ENCODE measurements at regions of chr13 and their contacts with region 1.

Region 1: DNA sequence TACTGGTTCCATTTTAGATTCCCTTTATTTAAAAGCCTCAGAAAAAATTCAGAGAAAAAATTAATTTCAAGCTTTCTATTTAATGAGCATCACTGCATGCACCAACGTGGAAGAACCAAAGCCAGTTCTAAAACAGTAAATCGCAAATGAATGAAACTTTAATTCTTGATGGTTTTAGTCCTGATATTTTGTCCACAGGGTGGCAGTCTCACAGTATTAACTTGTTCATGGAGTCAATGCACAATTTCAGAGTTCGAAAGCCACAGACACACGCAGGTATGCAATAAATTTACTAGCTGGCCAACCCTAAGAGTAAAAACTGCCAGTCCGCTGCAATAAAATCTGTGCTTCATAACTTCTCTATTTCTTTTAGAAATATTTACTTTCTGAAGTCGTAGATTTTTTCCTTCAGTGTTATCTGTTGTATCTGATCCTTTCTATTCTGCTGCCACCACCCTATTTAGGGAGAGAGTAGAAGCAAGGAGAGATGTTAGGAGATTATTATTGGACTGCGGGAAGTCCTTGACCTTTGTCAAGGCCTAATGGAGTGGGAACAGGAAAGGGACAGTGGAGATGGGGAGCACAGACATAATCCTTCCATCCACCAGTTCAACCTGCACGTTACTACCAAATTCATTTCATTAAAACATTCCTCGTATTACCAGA is 7.0 kb upstream of the WBP4 start:
- DNase-seq: no peak
- ATAC-seq: peak; percentile 18 to 34
- H3K4me3 ChIP-seq: no peak overlapping the region
- H3K27ac ChIP-seq: peak overlapping the region; percentile 77 to 100 (median 95)
- H3K4me1 ChIP-seq: peaks cover 96 to 98% of the 10 kb centered on the region in 2 donors
- H3K27me3 ChIP-seq: no peaks in the 10 kb centered on the region
- CTCF ChIP-seq: peak in 4 of 5 experiments; percentile 36 to 65 (median 58)
- POLR2A ChIP-seq: no peak

Region 2: DNA sequence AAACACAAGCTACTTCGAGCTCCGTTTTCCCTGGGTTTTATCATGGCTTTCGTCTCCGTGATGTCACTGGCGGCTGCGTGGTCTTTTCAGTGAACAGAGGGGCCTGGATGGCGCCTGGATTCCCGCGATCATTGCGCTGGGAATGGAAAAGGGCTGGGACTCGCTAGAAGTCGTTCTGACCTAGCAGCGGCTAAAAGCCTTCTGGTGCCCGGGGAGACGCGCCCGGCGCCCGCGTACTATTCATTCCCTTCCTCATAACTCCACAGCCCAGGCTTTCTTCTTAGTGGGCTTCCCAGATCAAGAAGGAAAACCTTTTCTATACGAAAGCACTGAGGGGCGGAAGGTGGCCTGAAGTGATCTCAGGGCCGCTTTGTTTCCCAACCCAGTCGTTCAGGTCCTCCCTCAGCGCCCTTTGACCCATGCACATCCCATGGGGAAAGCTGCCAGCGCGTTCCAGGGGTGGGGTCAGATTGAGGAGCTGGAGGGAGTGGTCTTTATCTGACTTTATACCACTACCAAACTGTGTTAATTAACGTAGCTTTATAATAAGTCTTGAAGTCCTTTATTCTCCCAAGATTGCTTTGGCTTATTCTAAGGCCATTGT is 131.8 kb before region 1 on chr13:
- in situ Hi-C with region 1: loop called in 1 of 4 experiments (anchors 10 kb)
- intact Hi-C with region 1: no loop called
- DNase-seq: no peak
- ATAC-seq: no peak
- H3K4me3 ChIP-seq: no peak overlapping the region
- H3K27ac ChIP-seq: no peak overlapping the region
- H3K4me1 ChIP-seq: peaks cover 9 to 13% of the 10 kb centered on the region in 2 donors
- H3K27me3 ChIP-seq: no peaks in the 10 kb centered on the region
- CTCF ChIP-seq: no peak
- POLR2A ChIP-seq: no peak

Region 3: GRCh38 chr13:40974460-40975407 is 79.6 kb before region 1 on chr13:
- in situ Hi-C with region 1: loop called in 1 of 4 experiments (anchors 10 kb)
- intact Hi-C with region 1: no loop called
- DNase-seq: peak in 1 of 2 donors; percentile 21
- ATAC-seq: peak; percentile 57 to 93
- H3K4me3 ChIP-seq: peak overlapping the region in 1 of 4 donors; percentile 3
- H3K27ac ChIP-seq: peak overlapping the region in 2 of 4 donors; percentile 3 to 22
- H3K4me1 ChIP-seq: peaks cover 70 to 92% of the 10 kb centered on the region in 2 donors
- H3K27me3 ChIP-seq: no peaks in the 10 kb centered on the region
- CTCF ChIP-seq: peak in 4 of 5 experiments; percentile 24 to 52 (median 35)
- POLR2A ChIP-seq: no peak